ENCODE measurements at regions of chr13 and their contacts with region 1.

Region 1: GRCh38 chr13:40578055-40578454 is 88.4 kb downstream of the FOXO1 start:
- DNase-seq: no peak
- ATAC-seq: no peak
- H3K4me3 ChIP-seq: no peak overlapping the region
- H3K4me3 Mint-ChIP-seq: peak overlapping the region in 8 of 10 donors; percentile 35 to 73 (median 64)
- H3K27ac ChIP-seq: peak overlapping the region; percentile 5
- H3K27ac Mint-ChIP-seq: peak overlapping the region in 8 of 9 donors; percentile 20 to 86 (median 71)
- H3K4me1 ChIP-seq: peaks cover 46 to 84% of the 10 kb centered on the region in 2 donors
- H3K4me1 Mint-ChIP-seq: peaks cover 71 to 100% (median 99%) of the 10 kb centered on the region in 7 donors
- H3K27me3 ChIP-seq: no peaks in the 10 kb centered on the region
- H3K27me3 Mint-ChIP-seq: no peaks in the 10 kb centered on the region

Region 2: GRCh38 chr13:40564342-40565001 is 13.6 kb before region 1 on chr13:
- CTCF ChIA-PET with region 1: no interaction called
- POLR2A ChIA-PET with region 1: interaction called, 5 read pairs
- intact Hi-C with region 1: loop called in 1 of 2 experiments (anchors 1 kb)
- DNase-seq: peak in 1 of 9 donors; percentile 45
- ATAC-seq: peak; percentile 65
- H3K4me3 ChIP-seq: no peak overlapping the region
- H3K4me3 Mint-ChIP-seq: peak overlapping the region in 9 of 10 donors; percentile 51 to 81 (median 72)
- H3K27ac ChIP-seq: peak overlapping the region; percentile 46
- H3K27ac Mint-ChIP-seq: peak overlapping the region; percentile 27 to 96 (median 81)
- H3K4me1 ChIP-seq: peaks cover 36 to 61% of the 10 kb centered on the region in 2 donors
- H3K4me1 Mint-ChIP-seq: peaks cover 61 to 96% (median 92%) of the 10 kb centered on the region in 7 donors
- H3K27me3 ChIP-seq: no peaks in the 10 kb centered on the region
- H3K27me3 Mint-ChIP-seq: no peaks in the 10 kb centered on the region

Region 3: DNA sequence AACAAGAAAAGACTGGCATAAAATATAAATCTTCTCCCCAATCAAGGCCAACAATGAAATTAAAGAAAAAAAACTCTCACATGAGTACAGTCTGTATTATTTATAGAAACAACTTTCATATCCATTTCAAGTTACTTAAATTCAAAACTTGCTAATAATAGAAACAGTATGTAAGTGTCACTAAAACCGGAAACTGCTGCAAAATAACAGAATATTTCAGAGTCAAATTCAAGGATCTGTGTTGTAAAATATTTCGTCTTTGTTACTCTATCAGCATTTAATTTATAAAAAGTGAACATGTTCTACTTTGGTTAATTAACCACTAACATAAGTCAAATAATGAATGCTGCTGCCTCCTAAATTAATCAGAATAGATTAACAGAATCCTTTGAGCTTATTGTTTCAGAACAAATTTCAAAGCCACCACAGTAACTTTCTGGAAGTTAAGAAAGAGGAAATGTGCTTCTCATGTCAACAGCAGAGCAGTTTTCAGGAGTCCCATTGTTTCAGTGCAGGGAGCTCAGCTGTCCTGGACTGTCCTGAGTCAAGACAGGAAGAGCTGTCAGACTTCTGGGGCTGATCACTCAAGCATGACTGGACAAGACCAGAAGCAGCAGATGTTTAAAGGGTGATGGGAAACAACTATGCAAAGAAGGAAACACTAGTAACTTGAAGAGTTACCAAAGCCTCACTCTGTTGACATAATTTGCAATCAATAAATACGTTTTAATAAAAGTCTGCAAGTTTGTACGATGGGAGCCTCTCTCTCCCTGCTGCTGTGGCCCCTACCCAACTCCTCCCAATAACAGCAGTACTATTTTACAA is 11.4 kb after region 1 on chr13:
- CTCF ChIA-PET with region 1: interaction called, 4 read pairs
- POLR2A ChIA-PET with region 1: interaction called, 3 read pairs
- intact Hi-C with region 1: loop called in 1 of 2 experiments (anchors 1 kb)
- DNase-seq: no peak
- ATAC-seq: peak; percentile 88
- H3K4me3 ChIP-seq: no peak overlapping the region
- H3K4me3 Mint-ChIP-seq: peak overlapping the region; percentile 29 to 85 (median 77)
- H3K27ac ChIP-seq: peak overlapping the region; percentile 25
- H3K27ac Mint-ChIP-seq: peak overlapping the region; percentile 35 to 93 (median 91)
- H3K4me1 ChIP-seq: peaks cover 42 to 75% of the 10 kb centered on the region in 2 donors
- H3K4me1 Mint-ChIP-seq: peaks cover 65 to 100% (median 95%) of the 10 kb centered on the region in 7 donors
- H3K27me3 ChIP-seq: no peaks in the 10 kb centered on the region
- H3K27me3 Mint-ChIP-seq: no peaks in the 10 kb centered on the region

Region 4: DNA sequence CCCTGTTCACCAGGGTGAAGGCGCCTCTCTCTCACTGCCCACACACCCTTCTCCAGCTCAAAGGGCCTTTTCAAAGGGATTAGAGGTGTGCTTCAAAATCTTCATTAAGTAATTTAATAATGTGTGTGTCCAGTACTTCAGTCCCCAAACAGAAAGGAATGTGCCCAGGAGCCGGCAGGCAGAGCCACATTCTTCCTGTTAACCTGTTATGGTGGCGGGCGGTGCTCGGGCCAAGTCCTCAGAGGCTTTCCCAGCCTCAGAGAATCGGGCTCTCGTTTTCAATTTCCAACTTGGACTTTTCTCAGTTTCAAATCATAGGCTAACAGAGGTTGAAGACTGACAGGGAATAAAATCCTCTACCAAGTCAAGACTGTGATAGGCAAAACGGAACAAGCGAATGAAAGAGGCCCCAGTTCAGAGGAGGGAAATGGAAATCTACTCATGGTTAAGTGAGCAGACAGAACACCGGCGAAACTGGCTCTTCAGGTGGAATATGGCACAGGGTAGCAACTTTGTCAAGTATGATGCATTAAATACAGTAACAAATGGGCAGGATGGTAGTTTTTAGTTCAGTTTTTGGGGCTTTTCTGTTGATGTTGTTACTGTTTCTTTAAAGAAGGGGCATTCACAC is 19.8 kb after region 1 on chr13:
- CTCF ChIA-PET with region 1: interaction called, 4 read pairs
- POLR2A ChIA-PET with region 1: interaction called, 7 read pairs
- intact Hi-C with region 1: loop called in 1 of 2 experiments (anchors 2 kb)
- DNase-seq: no peak
- ATAC-seq: no peak
- H3K4me3 ChIP-seq: no peak overlapping the region
- H3K4me3 Mint-ChIP-seq: peak overlapping the region; percentile 23 to 77 (median 64)
- H3K27ac ChIP-seq: no peak overlapping the region
- H3K27ac Mint-ChIP-seq: peak overlapping the region; percentile 54 to 90 (median 83)
- H3K4me1 ChIP-seq: peaks cover 43 to 92% of the 10 kb centered on the region in 2 donors
- H3K4me1 Mint-ChIP-seq: peaks cover 66 to 100% (median 93%) of the 10 kb centered on the region in 7 donors
- H3K27me3 ChIP-seq: no peaks in the 10 kb centered on the region
- H3K27me3 Mint-ChIP-seq: no peaks in the 10 kb centered on the region

Region 5: GRCh38 chr13:41345914-41346589 is 768.0 kb after region 1 on chr13:
- CTCF ChIA-PET with region 1: no interaction called
- POLR2A ChIA-PET with region 1: no interaction called
- intact Hi-C with region 1: no loop called
- DNase-seq: no peak
- ATAC-seq: no peak
- H3K4me3 ChIP-seq: no peak overlapping the region
- H3K4me3 Mint-ChIP-seq: peak overlapping the region in 4 of 10 donors; percentile 19 to 53 (median 42)
- H3K27ac ChIP-seq: peak overlapping the region; percentile 17
- H3K27ac Mint-ChIP-seq: peak overlapping the region in 8 of 9 donors; percentile 74 to 92 (median 85)
- H3K4me1 ChIP-seq: peaks cover 19 to 20% of the 10 kb centered on the region in 2 donors
- H3K4me1 Mint-ChIP-seq: peaks cover 19 to 73% (median 61%) of the 10 kb centered on the region in 7 donors
- H3K27me3 ChIP-seq: no peaks in the 10 kb centered on the region
- H3K27me3 Mint-ChIP-seq: no peaks in the 10 kb centered on the region